Heart left ventricle (tissue), 16 donors: ENCODE measurements at regions of chr17 and their contacts with region 1.

Region 1: DNA sequence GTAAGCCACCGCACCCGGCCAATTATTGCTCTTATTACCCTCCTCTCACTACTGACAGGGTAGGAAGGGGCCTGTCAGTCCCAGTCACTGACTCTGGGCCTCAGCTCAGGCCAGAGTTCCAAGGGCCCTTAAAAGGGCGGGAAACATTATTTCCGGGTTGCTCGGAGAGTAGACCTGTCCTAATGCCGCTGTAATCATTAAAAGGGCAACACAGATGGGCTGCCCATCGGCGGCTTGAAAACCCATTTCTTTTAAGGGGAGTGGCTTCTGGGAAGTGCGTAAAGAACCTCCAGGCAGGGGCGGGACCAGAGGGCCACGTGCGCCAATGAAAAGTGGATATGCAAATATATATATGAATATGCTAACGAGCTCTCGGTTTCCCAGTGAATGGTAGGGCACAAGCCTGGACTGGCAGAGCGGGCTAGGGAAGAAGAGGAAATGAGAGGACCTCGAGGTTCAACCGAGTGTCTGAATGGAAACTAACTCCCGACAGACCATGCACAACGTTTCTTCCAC is 26.6 kb downstream of the PIPOX start:
- DNase-seq: peak in 1 of 5 donors; percentile 51
- ATAC-seq: peak in 3 of 4 donors; percentile 34 to 77 (median 38)
- H3K4me3 ChIP-seq: no peak overlapping the region
- H3K27ac ChIP-seq: peak overlapping the region in 1 of 12 donors; percentile 12
- H3K4me1 ChIP-seq: peaks cover 0 to 31% (median 12%) of the 10 kb centered on the region in 12 donors
- H3K27me3 ChIP-seq: no peaks in the 10 kb centered on the region
- CTCF ChIP-seq: no peak
- POLR2A ChIP-seq: no peak

Region 2: DNA sequence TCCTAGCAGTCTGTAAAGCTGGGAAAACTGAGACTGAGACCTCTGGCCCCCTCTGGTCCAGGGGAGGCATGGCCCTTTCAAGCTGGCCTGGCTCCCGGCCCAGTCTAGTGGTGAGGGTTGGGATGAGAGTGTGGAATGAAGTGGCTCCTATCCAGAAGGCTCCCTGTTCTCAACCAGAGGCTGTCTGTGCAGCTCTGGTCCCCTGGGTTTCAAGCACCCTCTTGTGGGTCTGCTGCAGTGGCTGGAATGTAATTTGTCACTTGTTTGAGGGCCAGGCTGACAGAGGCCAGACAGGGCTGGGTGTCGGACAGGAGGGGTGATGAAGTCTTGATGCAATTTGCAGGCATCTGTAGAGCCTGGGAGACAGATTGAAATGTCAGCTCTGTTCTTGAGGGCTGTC is 96.2 kb before region 1 on chr17:
- intact Hi-C with region 1: loop called in 2 of 10 experiments (anchors 2 to 5 kb)
- DNase-seq: peak; percentile 78 to 93 (median 87)
- ATAC-seq: peak; percentile 82 to 89 (median 87)
- H3K4me3 ChIP-seq: no peak overlapping the region
- H3K27ac ChIP-seq: peak overlapping the region in 8 of 12 donors; percentile 16 to 86 (median 78)
- H3K4me1 ChIP-seq: peaks cover 2 to 55% (median 30%) of the 10 kb centered on the region in 12 donors
- H3K27me3 ChIP-seq: no peaks in the 10 kb centered on the region
- CTCF ChIP-seq: peak in 5 of 12 donors; percentile 10 to 31 (median 15)
- POLR2A ChIP-seq: no peak

Region 3: GRCh38 chr17:29005936-29006511 is 63.6 kb before region 1 on chr17 and contains the start of gene SEZ6:
- intact Hi-C with region 1: loop called in 1 of 10 experiments (anchors 5 kb)
- DNase-seq: peak; percentile 72 to 87 (median 82)
- ATAC-seq: peak in 3 of 4 donors; percentile 90 to 95 (median 91)
- H3K4me3 ChIP-seq: peak within 1 kb of the TSS in 1 of 12 donors; percentile 29
- H3K27ac ChIP-seq: no peak within 1 kb of the TSS
- H3K4me1 ChIP-seq: peaks cover 0 to 13% (median 3%) of the 10 kb centered on the region in 12 donors
- H3K27me3 ChIP-seq: peaks cover 9 to 57% (median 35%) of the 10 kb centered on the region in 9 donors
- CTCF ChIP-seq: peak in 3 of 12 donors; percentile 7 to 32 (median 9)
- POLR2A ChIP-seq: no peak
- total RNA-seq, gene SEZ6: 0.25 TPM in 1 of 9 donors, not detected in the others